Psoas muscle (tissue), 8 donors: ENCODE measurements at regions of chr17 and their contacts with region 1.

Region 1: GRCh38 chr17:42517516-42517915 is 18.5 kb upstream of the NAGLU start:
- DNase-seq: peak; percentile 84 to 91
- ATAC-seq: peak; percentile 33 to 58 (median 50)
- H3K4me3 ChIP-seq: no peak overlapping the region
- H3K27ac ChIP-seq: peak overlapping the region; percentile 84
- H3K4me1 ChIP-seq: peaks cover 56% of the 10 kb centered on the region
- H3K27me3 ChIP-seq: no peaks in the 10 kb centered on the region
- CTCF ChIP-seq: peak; percentile 80

Region 2: GRCh38 chr17:42322382-42323267 is 194.9 kb before region 1 on chr17:
- intact Hi-C with region 1: loop called in 1 of 2 experiments (anchors 5 kb)
- DNase-seq: peak; percentile 91 to 96
- ATAC-seq: peak; percentile 82 to 91 (median 86)
- H3K4me3 ChIP-seq: no peak overlapping the region
- H3K27ac ChIP-seq: no peak overlapping the region
- H3K4me1 ChIP-seq: peaks cover 5% of the 10 kb centered on the region
- H3K27me3 ChIP-seq: no peaks in the 10 kb centered on the region
- CTCF ChIP-seq: peak; percentile 99

Region 3: DNA sequence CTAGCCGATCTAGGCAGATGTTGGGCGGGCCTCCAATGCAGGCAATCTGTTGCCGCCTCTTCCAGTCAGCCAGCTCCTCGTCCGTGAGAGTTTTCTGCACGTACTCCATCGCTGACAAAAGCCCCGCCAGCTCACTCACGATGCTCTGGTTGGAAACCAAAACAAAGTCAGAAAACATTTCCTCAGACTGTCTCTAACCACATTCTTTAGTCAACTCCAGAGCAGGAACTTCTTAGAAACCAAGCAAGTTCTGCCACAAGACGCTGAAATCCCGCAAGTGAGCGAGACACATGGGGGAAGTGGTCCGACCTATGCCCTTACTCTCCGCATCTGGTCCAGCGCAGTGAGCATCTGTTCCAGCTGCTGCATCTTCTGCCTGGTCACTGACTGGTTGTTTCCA is 180.1 kb before region 1 on chr17:
- intact Hi-C with region 1: no loop called
- DNase-seq: no peak
- ATAC-seq: no peak
- H3K4me3 ChIP-seq: no peak overlapping the region
- H3K27ac ChIP-seq: no peak overlapping the region
- H3K4me1 ChIP-seq: no peaks in the 10 kb centered on the region
- H3K27me3 ChIP-seq: no peaks in the 10 kb centered on the region
- CTCF ChIP-seq: no peak

Region 4: DNA sequence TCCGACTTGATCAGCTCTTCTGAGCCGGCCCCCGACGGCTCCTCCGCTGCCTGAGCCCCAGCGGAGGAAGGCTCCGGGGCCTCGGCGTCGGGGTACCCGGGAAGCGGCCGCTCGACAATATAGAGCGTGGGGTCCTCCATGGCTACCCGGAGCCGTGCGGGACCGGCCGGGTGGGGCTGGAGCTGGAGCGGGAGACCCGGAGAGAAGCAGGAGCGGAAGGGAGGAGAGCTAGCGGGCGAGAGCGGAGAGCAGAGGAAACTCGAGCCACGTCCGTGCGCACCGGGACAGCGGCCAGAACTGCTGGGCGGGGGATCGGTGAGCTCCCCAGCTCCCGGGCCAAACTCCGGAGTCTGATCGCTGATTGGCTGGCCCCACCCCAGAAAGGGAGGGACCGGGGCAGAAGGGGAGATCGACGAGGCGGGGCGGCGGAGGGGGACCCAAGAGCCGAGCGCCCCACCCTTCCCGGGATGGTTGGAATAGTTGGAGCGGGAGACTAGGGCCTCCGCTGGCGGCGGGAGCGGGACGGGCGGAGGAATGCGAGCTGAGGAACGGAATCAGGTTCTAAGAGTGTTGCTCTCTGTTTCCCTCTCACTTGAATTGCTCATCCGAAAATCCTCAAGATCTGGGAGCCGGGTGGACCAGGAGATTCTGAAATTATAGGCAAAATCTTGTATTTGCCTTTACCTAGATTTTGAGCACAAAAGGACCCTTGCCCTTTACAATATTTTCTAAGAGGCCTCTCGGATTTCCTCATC is 94.4 kb before region 1 on chr17 and contains the start of gene CAVIN1:
- intact Hi-C with region 1: loop called in 1 of 2 experiments (anchors 5 kb)
- DNase-seq: peak; percentile 100
- ATAC-seq: peak; percentile 88 to 90 (median 88)
- H3K4me3 ChIP-seq: peak within 1 kb of the TSS; percentile 91
- H3K27ac ChIP-seq: peak within 1 kb of the TSS; percentile 94
- H3K4me1 ChIP-seq: peaks cover 39% of the 10 kb centered on the region
- H3K27me3 ChIP-seq: no peaks in the 10 kb centered on the region
- CTCF ChIP-seq: no peak
- total RNA-seq, gene CAVIN1: 109 to 151 (median 128) TPM

Region 5: GRCh38 chr17:42431758-42432211 is 85.7 kb before region 1 on chr17:
- intact Hi-C with region 1: loop called in 1 of 2 experiments (anchors 5 kb)
- DNase-seq: no peak
- ATAC-seq: no peak
- H3K4me3 ChIP-seq: no peak overlapping the region
- H3K27ac ChIP-seq: no peak overlapping the region
- H3K4me1 ChIP-seq: peaks cover 10% of the 10 kb centered on the region
- H3K27me3 ChIP-seq: no peaks in the 10 kb centered on the region
- CTCF ChIP-seq: no peak

Region 6: GRCh38 chr17:42467859-42468258 is 49.7 kb before region 1 on chr17:
- intact Hi-C with region 1: loop called (anchors 5 kb)
- DNase-seq: no peak
- ATAC-seq: no peak
- H3K4me3 ChIP-seq: no peak overlapping the region
- H3K27ac ChIP-seq: no peak overlapping the region
- H3K4me1 ChIP-seq: peaks cover 13% of the 10 kb centered on the region
- H3K27me3 ChIP-seq: no peaks in the 10 kb centered on the region
- CTCF ChIP-seq: no peak

Region 7: GRCh38 chr17:42472709-42473521 is 44.6 kb before region 1 on chr17:
- intact Hi-C with region 1: loop called (anchors 5 kb)
- DNase-seq: no peak
- ATAC-seq: peak in 2 of 4 donors; percentile 35 to 50
- H3K4me3 ChIP-seq: no peak overlapping the region
- H3K27ac ChIP-seq: no peak overlapping the region
- H3K4me1 ChIP-seq: no peaks in the 10 kb centered on the region
- H3K27me3 ChIP-seq: no peaks in the 10 kb centered on the region
- CTCF ChIP-seq: no peak

Region 8: DNA sequence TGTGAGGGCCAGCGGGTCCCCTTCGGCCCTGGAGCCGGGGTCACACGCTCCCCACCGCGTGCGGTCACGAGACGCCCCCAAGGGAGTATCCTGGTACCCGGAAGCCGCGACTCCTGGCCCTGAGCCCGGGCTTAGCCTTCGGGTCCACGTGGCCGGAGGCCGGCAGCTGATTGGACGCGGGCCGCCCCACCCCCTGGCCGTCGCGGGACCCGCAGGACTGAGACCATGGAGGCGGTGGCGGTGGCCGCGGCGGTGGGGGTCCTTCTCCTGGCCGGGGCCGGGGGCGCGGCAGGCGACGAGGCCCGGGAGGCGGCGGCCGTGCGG is 18.5 kb after region 1 on chr17 and contains the start of gene NAGLU:
- intact Hi-C with region 1: no loop called
- DNase-seq: peak; percentile 98 to 99
- ATAC-seq: peak; percentile 81 to 84 (median 82)
- H3K4me3 ChIP-seq: peak within 1 kb of the TSS; percentile 74
- H3K27ac ChIP-seq: peak within 1 kb of the TSS; percentile 92
- H3K4me1 ChIP-seq: peaks cover 28% of the 10 kb centered on the region
- H3K27me3 ChIP-seq: no peaks in the 10 kb centered on the region
- CTCF ChIP-seq: no peak
- total RNA-seq, gene NAGLU: 9.1 to 17.8 (median 11.7) TPM